Activated CD4-positive, alpha-beta T cell treated with anti-CD3 and anti-CD28 coated beads for 36 hours (primary cell): ENCODE measurements at regions of chr1 and their contacts with region 1.

Region 1: DNA sequence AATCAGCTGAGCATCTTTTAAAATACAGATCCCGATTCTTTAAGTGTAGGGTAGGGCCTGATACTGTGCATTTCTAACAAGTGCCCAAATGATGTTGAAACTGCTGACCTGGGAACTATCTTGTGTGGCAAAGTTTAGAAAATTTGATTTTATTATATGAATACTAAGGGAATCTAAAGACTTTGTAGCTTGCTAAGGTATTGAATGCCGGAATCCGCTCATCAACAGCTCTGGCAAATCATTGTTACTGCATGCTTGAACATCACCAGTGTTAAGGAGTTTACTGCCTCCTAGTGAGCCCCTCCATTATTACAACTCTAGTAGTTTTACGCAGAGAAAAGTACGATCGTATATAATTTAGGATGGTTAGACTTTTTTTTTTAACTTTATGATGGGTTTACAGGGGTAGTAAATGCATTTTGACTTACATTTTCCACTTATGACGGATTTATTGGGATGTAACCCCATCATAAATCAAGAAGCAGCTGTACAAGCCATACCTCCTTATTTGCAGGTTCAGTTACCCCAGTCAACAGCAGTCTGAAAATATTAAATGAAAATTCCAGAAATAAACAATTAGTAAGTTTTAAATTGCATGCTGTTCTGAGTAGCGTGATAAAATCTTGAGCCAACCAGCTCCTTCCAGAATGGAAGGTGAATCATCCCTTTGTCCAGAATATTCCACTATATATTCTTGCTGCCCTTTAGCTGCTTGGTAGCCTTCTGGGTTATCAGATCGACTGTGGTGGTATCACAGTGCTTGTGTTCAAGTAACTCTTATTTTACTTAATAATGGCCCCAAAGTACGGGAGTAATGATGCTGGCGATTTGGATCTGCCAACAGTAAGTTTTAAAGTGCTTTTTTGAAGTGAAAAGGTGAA is 892 bp downstream of the TYW3 start:
- DNase-seq: peak; percentile 60
- ATAC-seq: peak; percentile 65
- H3K4me3 Mint-ChIP-seq: peak overlapping the region; percentile 95
- H3K27ac Mint-ChIP-seq: peak overlapping the region; percentile 99
- H3K4me1 Mint-ChIP-seq: peaks cover 47% of the 10 kb centered on the region
- H3K27me3 Mint-ChIP-seq: no peaks in the 10 kb centered on the region

Region 2: DNA sequence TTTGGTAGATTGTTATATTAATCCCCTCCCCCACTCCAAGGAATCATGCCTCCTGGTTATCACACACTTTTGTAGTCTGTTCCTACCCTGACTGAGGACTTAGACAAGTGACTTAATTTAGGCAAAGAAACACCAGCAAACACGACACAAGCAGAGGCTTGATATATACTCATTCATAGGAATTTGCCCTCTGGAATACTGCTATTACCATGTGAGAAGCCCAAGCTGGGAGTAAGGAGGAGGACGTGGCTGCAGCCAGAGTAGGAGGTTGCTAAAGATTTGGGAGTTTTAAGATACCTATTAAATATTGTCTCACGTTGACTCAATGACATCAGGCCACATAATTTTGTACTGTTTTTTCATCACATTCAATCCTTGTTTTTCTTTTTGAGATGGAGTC is 321.6 kb before region 1 on chr1:
- CTCF ChIA-PET with region 1: no interaction called
- POLR2A ChIA-PET with region 1: no interaction called
- intact Hi-C with region 1: no loop called
- DNase-seq: no peak
- ATAC-seq: no peak
- H3K4me3 Mint-ChIP-seq: no peak overlapping the region
- H3K27ac Mint-ChIP-seq: no peak overlapping the region
- H3K4me1 Mint-ChIP-seq: no peaks in the 10 kb centered on the region
- H3K27me3 Mint-ChIP-seq: peaks cover 2% of the 10 kb centered on the region

Region 3: GRCh38 chr1:74629283-74629682 is 104.6 kb before region 1 on chr1:
- CTCF ChIA-PET with region 1: no interaction called
- POLR2A ChIA-PET with region 1: no interaction called
- intact Hi-C with region 1: no loop called
- DNase-seq: no peak
- ATAC-seq: no peak
- H3K4me3 Mint-ChIP-seq: no peak overlapping the region
- H3K27ac Mint-ChIP-seq: no peak overlapping the region
- H3K4me1 Mint-ChIP-seq: no peaks in the 10 kb centered on the region
- H3K27me3 Mint-ChIP-seq: peaks cover 4% of the 10 kb centered on the region

Region 4: GRCh38 chr1:74689621-74690363 is 44.1 kb before region 1 on chr1:
- CTCF ChIA-PET with region 1: interaction called, 9 read pairs
- POLR2A ChIA-PET with region 1: no interaction called
- intact Hi-C with region 1: loop called in 1 of 2 experiments (anchors 1 kb)
- DNase-seq: peak; percentile 53
- ATAC-seq: no peak
- H3K4me3 Mint-ChIP-seq: no peak overlapping the region
- H3K27ac Mint-ChIP-seq: no peak overlapping the region
- H3K4me1 Mint-ChIP-seq: no peaks in the 10 kb centered on the region
- H3K27me3 Mint-ChIP-seq: no peaks in the 10 kb centered on the region

Region 5: DNA sequence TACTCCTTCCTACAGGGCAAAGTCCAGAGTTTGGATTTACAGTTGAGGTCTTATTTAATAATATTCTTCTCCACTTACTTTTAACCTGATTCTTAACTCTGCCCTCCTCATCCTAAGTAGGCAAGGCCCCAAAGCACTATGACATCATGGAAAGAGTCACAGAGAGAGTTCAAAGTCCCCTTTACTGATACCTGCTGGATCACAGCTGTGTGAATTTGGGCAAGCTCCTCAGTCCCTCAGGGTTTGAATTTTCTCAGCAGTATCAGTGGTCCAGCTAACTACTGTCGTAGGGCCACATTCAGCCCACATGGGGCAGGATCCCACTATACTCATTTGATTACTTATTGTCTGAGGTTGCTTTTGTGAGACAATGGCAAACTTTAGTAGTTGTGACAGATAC is 15.1 kb after region 1 on chr1:
- CTCF ChIA-PET with region 1: interaction called, 18 read pairs
- POLR2A ChIA-PET with region 1: no interaction called
- intact Hi-C with region 1: no loop called
- DNase-seq: no peak
- ATAC-seq: peak; percentile 39
- H3K4me3 Mint-ChIP-seq: no peak overlapping the region
- H3K27ac Mint-ChIP-seq: peak overlapping the region; percentile 30
- H3K4me1 Mint-ChIP-seq: peaks cover 8% of the 10 kb centered on the region
- H3K27me3 Mint-ChIP-seq: no peaks in the 10 kb centered on the region

Region 6: GRCh38 chr1:75724472-75725022 is 990.7 kb after region 1 on chr1 and contains the start of gene ACADM:
- CTCF ChIA-PET with region 1: no interaction called
- POLR2A ChIA-PET with region 1: no interaction called
- intact Hi-C with region 1: loop called (anchors 2 kb)
- DNase-seq: peak; percentile 91
- ATAC-seq: peak; percentile 94
- H3K4me3 Mint-ChIP-seq: peak within 1 kb of the TSS; percentile 98
- H3K27ac Mint-ChIP-seq: peak within 1 kb of the TSS; percentile 98
- H3K4me1 Mint-ChIP-seq: peaks cover 40% of the 10 kb centered on the region
- H3K27me3 Mint-ChIP-seq: no peaks in the 10 kb centered on the region
- total RNA-seq, gene ACADM: 47.2 to 51.8 TPM